Activated CD4-positive, alpha-beta memory T cell treated with anti-CD3 and anti-CD28 coated beads, Interleukin-2, amount 10 ng/mL, durations not matched to agents 7 days and 5 days (primary cell): ENCODE measurements at regions of chr16 and their contacts with region 1.

Region 1: DNA sequence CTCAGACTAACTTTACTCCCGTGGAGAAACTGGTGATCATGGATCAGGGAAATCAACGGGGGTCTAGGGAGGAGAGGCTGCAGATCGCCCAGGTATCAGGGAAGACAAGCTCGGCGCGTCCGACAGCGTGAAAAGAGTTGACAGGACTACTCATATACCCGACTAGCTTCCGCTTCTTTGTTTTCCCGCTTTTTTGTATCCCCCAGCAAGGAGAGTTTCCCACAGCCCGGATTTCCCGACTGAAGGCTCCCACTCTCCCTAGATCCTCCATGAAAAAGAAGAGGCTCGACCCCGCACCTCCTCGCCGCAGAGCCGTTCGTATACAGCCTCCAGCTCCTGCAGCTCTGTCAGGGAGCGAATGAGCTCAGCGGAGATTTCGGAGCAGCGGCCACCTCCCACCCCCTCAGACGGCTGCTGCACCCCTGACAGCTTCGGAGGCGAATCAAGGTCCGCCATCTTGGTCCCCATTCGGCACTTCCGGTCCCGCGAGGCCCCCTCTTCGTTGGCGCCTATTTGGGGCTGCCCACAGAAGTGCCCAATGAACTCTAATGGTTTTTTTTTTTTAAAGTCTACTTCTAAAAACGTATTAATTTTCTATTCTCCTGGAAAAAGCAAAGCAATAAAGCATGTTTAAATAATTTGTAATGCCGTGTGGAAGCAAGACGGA is at the start of gene COG4:
- DNase-seq: peak; percentile 92
- H3K4me3 Mint-ChIP-seq: peak within 1 kb of the TSS; percentile 93
- H3K27ac Mint-ChIP-seq: peak within 1 kb of the TSS; percentile 95
- H3K4me1 Mint-ChIP-seq: peaks cover 45% of the 10 kb centered on the region
- H3K27me3 Mint-ChIP-seq: no peaks in the 10 kb centered on the region
- total RNA-seq, gene COG4: 71.2 to 71.4 TPM

Region 2: GRCh38 chr16:70251629-70252354 is 271.4 kb before region 1 on chr16 and contains the start of gene EXOSC6:
- CTCF ChIA-PET with region 1: interaction called, 5 read pairs
- POLR2A ChIA-PET with region 1: interaction called, 13 read pairs
- DNase-seq: peak; percentile 95
- H3K4me3 Mint-ChIP-seq: peak within 1 kb of the TSS; percentile 84
- H3K27ac Mint-ChIP-seq: peak within 1 kb of the TSS; percentile 88
- H3K4me1 Mint-ChIP-seq: peaks cover 20% of the 10 kb centered on the region
- H3K27me3 Mint-ChIP-seq: no peaks in the 10 kb centered on the region
- total RNA-seq, gene EXOSC6: 24.3 to 24.4 TPM

Region 3: DNA sequence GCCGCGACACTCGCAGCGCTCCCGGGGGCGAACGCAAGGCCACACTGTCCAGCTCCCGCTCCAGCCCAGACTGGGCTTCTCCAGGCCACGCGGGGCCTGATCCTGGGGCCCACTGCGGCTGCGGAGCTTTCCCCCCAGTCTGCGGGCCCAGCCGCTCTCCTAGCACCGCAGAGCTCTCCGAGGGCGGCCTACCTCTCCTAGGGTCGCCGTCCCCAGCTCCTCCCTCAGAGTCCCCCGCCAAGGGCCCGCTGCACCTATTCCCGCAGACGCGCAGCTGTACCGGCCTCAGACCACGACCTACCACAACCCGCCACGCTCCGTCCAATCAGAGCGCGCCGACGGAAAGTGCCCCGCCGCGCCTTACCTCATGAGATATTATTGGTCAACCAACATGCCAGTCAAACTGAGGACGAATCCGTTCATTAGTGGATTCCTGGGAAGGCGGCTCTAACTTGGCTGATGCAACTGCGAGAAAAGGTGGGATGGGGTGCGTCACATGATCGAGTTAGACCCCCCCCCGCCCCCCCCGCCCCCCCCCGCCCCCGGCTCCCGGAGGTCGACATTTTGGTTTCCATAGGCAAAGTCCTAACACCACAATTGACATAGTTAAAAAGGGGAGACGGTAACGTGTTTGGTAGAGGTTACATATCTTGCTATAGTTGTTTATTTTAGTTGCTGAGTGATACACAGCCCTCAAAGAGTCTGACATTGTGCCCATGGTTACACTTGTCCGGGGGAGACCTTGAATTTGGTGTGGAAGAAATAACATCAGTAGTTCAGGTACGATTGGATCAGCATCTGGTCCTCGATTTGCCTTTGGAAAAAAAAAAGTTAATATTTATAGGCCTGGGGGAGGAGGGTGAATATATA is 233.7 kb before region 1 on chr16 and contains the start of gene AARS1:
- CTCF ChIA-PET with region 1: interaction called, 3 read pairs
- POLR2A ChIA-PET with region 1: interaction called, 44 read pairs
- DNase-seq: peak; percentile 96
- H3K4me3 Mint-ChIP-seq: peak within 1 kb of the TSS; percentile 99
- H3K27ac Mint-ChIP-seq: peak within 1 kb of the TSS; percentile 98
- H3K4me1 Mint-ChIP-seq: peaks cover 32% of the 10 kb centered on the region
- H3K27me3 Mint-ChIP-seq: no peaks in the 10 kb centered on the region
- total RNA-seq, gene AARS1: 128 to 129 TPM

Region 4: DNA sequence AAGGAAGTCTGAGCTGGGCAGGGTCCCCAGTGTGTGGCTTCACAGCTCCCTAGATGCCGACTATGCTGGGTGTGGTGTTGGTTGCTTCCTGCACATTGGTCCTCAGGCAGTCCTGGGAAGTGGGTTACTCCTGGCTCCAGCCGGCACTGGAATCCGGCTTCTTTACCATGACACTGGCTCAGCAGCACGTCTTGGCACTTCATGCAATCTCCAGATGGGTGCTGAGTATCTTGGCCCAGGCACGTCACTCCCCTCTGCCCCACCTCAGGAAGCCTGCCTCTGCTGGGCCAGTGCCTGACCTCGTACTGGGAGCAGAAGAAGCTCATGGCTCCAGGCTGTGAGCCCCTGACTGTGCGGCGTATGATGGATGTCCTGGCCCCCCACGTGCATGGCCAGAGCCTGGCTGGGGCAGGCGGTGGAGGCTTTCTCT is 44.3 kb before region 1 on chr16:
- CTCF ChIA-PET with region 1: no interaction called
- POLR2A ChIA-PET with region 1: interaction called, 11 read pairs
- DNase-seq: no peak
- H3K4me3 Mint-ChIP-seq: no peak overlapping the region
- H3K27ac Mint-ChIP-seq: no peak overlapping the region
- H3K4me1 Mint-ChIP-seq: peaks cover 31% of the 10 kb centered on the region
- H3K27me3 Mint-ChIP-seq: no peaks in the 10 kb centered on the region

Region 5: GRCh38 chr16:70508752-70509151 is 14.5 kb before region 1 on chr16:
- CTCF ChIA-PET with region 1: interaction called, 25 read pairs
- POLR2A ChIA-PET with region 1: interaction called, 30 read pairs
- DNase-seq: no peak
- H3K4me3 Mint-ChIP-seq: no peak overlapping the region
- H3K27ac Mint-ChIP-seq: peak overlapping the region; percentile 66
- H3K4me1 Mint-ChIP-seq: peaks cover 9% of the 10 kb centered on the region
- H3K27me3 Mint-ChIP-seq: no peaks in the 10 kb centered on the region